ENCODE measurements at regions of chr17 and their contacts with region 1.

Region 1: DNA sequence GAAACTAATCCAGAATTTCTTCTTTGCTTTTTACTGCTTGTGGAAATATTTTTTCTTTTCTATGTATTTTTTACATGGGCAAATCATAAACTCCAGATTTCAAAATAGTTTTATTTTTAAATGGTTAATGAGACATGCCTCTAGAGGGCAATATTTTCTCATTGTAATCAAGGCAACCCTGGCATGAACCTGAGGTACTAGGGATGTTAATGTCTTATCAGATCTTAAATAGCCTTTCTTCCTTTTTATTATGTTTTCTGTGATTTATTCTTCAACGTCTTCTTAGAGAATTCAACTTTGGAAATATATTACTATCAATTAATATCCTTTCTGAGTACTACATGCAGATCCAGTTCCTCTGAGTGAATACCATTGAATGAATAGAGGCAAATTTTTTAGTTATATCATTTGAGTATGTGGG is 324.7 kb downstream of the BCAS3 start:
- DNase-seq: no peak
- H3K4me3 Mint-ChIP-seq: no peak overlapping the region
- H3K27ac Mint-ChIP-seq: no peak overlapping the region
- H3K4me1 Mint-ChIP-seq: no peaks in the 10 kb centered on the region
- H3K27me3 Mint-ChIP-seq: no peaks in the 10 kb centered on the region

Region 2: DNA sequence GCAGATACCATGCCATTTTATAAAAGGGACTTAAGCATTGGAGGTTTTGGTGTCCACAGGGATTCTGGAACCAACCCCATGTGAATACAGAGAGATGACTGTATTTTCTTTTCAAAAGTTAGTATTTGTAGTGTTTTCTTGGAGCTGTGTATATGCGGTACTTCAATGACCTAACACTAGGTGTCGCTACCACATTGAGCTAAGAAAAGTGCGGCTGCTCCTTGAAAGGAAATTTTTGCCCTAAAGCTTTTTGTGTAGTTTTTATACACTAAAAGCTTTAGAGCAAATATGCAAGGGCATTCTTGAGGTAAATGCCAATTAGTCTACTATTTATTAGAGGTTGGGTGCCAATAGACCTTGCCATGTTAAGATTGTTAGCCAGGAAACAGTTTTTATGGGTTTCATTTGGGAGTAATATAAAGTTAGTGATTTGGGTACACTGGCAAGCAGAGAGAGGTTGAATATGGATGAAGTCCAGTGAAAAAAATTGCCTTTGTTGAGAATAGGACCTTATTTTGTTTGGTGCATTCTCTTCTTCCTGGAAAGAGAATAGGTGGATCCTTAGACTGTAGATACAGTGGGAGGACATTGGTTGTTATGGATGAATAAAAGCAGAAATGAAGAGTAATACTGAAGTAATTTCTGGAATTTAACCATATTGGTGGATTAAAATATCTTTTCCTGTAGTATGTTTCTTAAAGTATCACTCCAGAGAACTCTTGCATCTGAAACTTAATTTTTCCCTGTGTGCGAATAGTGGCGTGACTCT is 281.4 kb before region 1 on chr17:
- CTCF ChIA-PET with region 1: interaction called, 9 read pairs
- POLR2A ChIA-PET with region 1: no interaction called
- intact Hi-C with region 1: loop called (anchors 10 kb)
- DNase-seq: peak; percentile 36
- H3K4me3 Mint-ChIP-seq: no peak overlapping the region
- H3K27ac Mint-ChIP-seq: no peak overlapping the region
- H3K4me1 Mint-ChIP-seq: no peaks in the 10 kb centered on the region
- H3K27me3 Mint-ChIP-seq: no peaks in the 10 kb centered on the region

Region 3: DNA sequence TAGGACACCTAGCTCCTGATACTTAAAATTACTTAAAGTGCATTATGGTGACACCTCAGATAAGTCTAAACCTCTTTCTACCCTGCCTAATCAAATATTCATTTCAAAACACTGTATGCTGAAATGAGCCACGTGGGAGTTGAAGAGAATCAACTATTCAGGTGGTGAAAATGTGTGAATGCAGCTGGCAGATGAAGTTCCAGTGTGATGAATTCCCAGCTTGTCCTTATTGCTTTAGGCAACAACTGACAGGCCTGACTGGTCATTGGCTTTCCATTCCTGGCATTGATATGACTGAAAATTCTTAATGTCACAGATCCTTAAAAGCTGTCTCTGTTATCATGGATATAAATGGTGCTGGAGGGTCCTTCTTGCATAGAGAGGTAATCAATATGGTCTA is 95.5 kb after region 1 on chr17:
- CTCF ChIA-PET with region 1: no interaction called
- POLR2A ChIA-PET with region 1: no interaction called
- intact Hi-C with region 1: no loop called
- DNase-seq: no peak
- H3K4me3 Mint-ChIP-seq: no peak overlapping the region
- H3K27ac Mint-ChIP-seq: no peak overlapping the region
- H3K4me1 Mint-ChIP-seq: no peaks in the 10 kb centered on the region
- H3K27me3 Mint-ChIP-seq: no peaks in the 10 kb centered on the region

Region 4: DNA sequence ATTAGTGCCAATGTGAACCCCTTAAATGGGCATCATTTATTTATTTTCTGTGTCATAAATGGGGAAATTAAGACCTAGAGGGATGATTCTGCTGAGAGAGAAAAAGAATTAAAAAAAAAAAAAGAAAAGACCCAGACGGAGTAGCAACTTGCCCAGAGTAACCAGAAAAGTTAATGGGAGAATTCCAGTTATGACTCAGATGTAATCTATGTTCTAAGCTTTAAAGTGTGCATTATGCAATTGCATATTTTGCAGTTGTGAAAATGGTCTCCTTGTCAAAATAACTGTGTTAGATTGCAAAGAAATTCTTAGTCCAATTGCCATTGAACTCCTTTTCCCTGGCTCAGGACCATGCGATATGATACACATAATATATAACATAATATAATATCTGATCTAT is 358.8 kb after region 1 on chr17:
- CTCF ChIA-PET with region 1: interaction called, 7 read pairs
- POLR2A ChIA-PET with region 1: no interaction called
- intact Hi-C with region 1: loop called (anchors 1 kb)
- DNase-seq: no peak
- H3K4me3 Mint-ChIP-seq: no peak overlapping the region
- H3K27ac Mint-ChIP-seq: no peak overlapping the region
- H3K4me1 Mint-ChIP-seq: no peaks in the 10 kb centered on the region
- H3K27me3 Mint-ChIP-seq: no peaks in the 10 kb centered on the region

Region 5: DNA sequence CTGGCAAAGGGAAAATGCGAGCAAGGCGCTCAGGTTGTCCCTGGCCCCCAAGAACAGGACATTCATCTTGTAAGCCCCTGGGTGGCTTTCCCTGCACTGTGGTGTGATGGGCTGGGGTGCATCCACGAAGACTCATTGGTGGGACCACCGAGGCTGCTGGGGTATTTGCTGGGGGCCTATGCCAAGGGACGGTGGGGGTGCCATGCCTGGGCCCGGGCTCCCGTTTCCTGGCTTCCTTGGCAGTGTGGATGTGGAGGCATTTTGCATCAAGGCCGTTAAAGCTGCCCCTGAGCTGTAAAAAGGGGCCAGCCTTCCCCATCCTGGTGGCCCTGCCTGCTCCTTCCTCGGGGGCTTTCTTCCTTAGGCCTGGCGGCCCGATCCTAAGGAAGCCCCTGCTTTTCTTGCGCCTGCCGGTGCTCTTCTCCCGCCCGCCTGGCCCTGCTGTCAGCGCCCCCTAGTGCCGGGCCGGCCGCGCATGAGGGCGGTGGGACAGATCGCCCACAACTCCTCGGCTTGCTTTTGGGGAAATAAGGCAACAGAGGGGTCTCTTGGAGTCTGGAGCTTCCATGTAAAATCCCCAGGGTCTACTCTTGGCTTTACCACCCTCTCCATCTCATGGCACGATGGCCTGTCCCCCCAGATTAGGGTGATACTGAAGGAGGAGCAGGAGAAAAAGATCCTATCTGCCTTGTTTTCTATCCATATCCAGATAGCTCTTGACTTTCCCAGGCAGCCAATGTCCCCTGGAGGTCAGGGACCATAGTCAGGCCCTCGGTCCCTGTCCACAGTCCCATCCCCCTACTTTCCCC is 387.5 kb after region 1 on chr17:
- CTCF ChIA-PET with region 1: interaction called, 6 read pairs
- POLR2A ChIA-PET with region 1: no interaction called
- intact Hi-C with region 1: loop called (anchors 1 kb)
- DNase-seq: peak; percentile 60
- H3K4me3 Mint-ChIP-seq: no peak overlapping the region
- H3K27ac Mint-ChIP-seq: no peak overlapping the region
- H3K4me1 Mint-ChIP-seq: peaks cover 2% of the 10 kb centered on the region
- H3K27me3 Mint-ChIP-seq: peaks cover 9% of the 10 kb centered on the region